Activated naive CD4-positive, alpha-beta T cell treated with anti-CD3 and anti-CD28 coated beads for 36 hours (primary cell): ENCODE measurements at regions of chr2 and their contacts with region 1.

Region 1: GRCh38 chr2:96913398-96914202 is 43.7 kb upstream of the SEMA4C start:
- DNase-seq: peak; percentile 75
- H3K4me3 Mint-ChIP-seq: peak overlapping the region; percentile 48
- H3K27ac Mint-ChIP-seq: peak overlapping the region; percentile 65
- H3K4me1 Mint-ChIP-seq: peaks cover 56% of the 10 kb centered on the region
- H3K27me3 Mint-ChIP-seq: no peaks in the 10 kb centered on the region

Region 2: GRCh38 chr2:96359310-96359709 is 554.3 kb before region 1 on chr2:
- CTCF ChIA-PET with region 1: no interaction called
- intact Hi-C with region 1: no loop called
- DNase-seq: peak; percentile 42
- H3K4me3 Mint-ChIP-seq: no peak overlapping the region
- H3K27ac Mint-ChIP-seq: no peak overlapping the region
- H3K4me1 Mint-ChIP-seq: no peaks in the 10 kb centered on the region
- H3K27me3 Mint-ChIP-seq: no peaks in the 10 kb centered on the region

Region 3: GRCh38 chr2:96874118-96874831 is 39.3 kb before region 1 on chr2:
- CTCF ChIA-PET with region 1: no interaction called
- intact Hi-C with region 1: loop called (anchors 2 kb)
- DNase-seq: peak; percentile 43
- H3K4me3 Mint-ChIP-seq: no peak overlapping the region
- H3K27ac Mint-ChIP-seq: peak overlapping the region; percentile 38
- H3K4me1 Mint-ChIP-seq: peaks cover 40% of the 10 kb centered on the region
- H3K27me3 Mint-ChIP-seq: peaks cover 6% of the 10 kb centered on the region

Region 4: DNA sequence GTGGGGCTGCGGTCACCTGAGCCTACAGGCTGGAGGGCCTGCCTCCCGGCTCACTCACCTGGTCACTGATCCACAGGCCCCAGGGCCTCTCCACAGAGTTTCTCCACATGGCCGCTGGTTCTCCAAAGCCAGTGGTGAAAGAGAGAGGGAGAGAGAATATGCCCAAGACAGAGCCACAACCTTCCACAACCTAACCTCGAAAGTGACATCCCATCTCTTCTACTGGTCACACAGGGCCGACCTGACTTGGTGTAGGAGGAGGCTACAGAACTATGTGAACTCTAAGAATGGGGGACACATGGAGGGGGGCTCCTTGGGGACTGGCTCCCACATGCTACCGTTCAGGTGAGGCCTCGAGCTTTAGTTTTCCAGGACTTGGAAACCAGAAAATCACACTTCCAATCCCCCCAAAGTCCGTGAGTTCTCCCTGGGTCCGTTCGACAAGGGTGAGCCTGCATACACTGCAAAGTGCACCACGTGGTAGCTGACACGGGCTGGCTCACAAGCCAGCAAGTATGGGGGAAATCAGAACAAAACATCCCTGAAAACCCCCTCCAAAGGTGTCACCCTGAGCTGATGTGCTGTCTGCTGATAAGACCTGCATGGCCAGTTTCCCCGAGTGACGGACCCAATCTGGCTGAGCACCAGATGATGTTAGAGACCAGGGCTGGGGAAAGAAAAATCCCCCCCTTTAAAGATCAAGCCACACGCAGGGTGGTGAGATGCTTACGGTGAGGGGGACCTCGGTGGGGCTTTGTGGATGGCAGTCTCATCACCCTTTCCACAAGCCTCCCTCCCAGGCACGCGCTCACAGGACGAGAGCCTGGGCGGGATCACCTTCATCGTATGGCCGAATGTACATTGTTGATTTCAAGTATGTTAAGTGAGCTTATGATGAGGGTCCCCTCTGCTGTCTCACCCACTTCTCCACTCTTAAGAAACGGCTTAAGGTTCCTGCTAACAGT is 10.5 kb after region 1 on chr2:
- CTCF ChIA-PET with region 1: no interaction called
- intact Hi-C with region 1: loop called (anchors 1 kb)
- DNase-seq: peak; percentile 55
- H3K4me3 Mint-ChIP-seq: peak overlapping the region; percentile 73
- H3K27ac Mint-ChIP-seq: peak overlapping the region; percentile 87
- H3K4me1 Mint-ChIP-seq: peaks cover 23% of the 10 kb centered on the region
- H3K27me3 Mint-ChIP-seq: no peaks in the 10 kb centered on the region

Region 5: GRCh38 chr2:96940001-96940615 is 26.5 kb after region 1 on chr2:
- CTCF ChIA-PET with region 1: no interaction called
- intact Hi-C with region 1: loop called (anchors 2 kb)
- DNase-seq: no peak
- H3K4me3 Mint-ChIP-seq: no peak overlapping the region
- H3K27ac Mint-ChIP-seq: no peak overlapping the region
- H3K4me1 Mint-ChIP-seq: peaks cover 29% of the 10 kb centered on the region
- H3K27me3 Mint-ChIP-seq: no peaks in the 10 kb centered on the region